Pancreas (tissue), 10 donors: ENCODE measurements at regions of chr2 and their contacts with region 1.

Region 1: DNA sequence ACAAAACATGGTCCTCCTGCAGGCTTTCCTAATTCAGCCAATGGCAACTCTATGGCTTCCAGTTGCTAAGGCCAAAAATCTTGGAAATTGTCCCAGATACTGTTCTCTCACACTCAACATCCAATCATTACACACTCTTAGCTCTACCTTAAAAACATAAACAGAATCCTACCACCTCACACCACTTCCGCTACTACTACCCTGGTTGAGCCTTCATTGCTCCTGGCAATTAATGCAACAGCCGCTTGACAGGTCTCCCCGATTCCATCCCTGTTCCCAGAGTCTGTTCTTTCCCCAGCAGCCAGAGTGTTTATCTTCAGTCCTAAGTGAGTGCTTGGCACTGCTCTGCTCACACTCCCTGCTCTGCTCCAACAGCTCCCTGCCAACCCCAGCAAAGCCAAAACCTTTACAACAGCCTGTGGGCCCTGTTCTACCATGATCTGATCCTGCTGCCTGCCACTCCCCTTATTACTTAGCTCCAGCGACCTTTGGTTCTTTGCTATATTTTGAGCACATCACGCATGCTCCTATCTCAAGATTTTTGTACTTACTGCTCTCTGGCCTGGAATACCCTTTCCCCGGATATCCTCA is 67.5 kb upstream of the AMMECR1L start:
- DNase-seq: peak in 3 of 6 donors; percentile 16 to 27 (median 23)
- ATAC-seq: peak; percentile 69 to 89 (median 82)
- H3K4me3 ChIP-seq: no peak overlapping the region
- H3K27ac ChIP-seq: peak overlapping the region in 1 of 4 donors; percentile 34
- H3K4me1 ChIP-seq: peaks cover 0 to 16% (median 0%) of the 10 kb centered on the region in 3 donors
- H3K27me3 ChIP-seq: no peaks in the 10 kb centered on the region
- CTCF ChIP-seq: no peak

Region 2: DNA sequence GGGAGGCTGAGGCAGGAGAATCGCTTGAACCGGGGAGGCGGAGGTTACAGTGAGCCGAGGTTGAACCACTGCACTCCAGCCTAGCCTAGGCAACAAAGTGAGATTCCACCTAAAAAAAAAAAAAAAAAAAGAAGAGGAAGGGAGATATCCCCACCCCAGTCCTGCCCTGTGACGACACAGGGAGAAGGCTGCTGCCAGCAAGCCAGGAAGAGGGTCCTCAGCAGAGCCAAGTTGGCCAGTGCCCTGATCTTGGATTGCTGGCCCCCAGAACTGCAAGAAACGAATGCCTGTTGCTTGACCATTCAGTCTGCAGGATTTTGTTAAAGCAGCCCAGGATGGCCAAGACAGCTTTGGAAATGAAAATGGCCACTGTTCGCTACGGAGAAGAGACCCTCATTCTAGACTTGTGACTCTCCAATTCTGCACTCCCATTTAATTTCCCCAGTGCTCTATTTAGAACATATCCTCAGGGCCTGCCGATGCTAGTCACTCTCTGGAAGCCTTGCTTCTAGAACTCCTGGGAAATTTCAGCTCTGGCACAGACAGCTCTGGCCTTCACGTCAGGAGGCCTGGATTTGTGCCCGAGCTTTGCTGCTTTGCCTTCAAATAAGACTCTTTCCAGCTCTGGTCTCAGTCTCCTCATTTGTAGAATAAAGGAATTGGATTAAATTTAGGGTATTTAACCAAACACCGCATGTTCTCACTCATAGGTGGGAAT is 51.7 kb before region 1 on chr2:
- intact Hi-C with region 1: loop called in 1 of 3 experiments (anchors 5 kb)
- DNase-seq: peak; percentile 78 to 90 (median 86)
- ATAC-seq: peak; percentile 88 to 93 (median 92)
- H3K4me3 ChIP-seq: no peak overlapping the region
- H3K27ac ChIP-seq: peak overlapping the region in 3 of 4 donors; percentile 22 to 89 (median 81)
- H3K4me1 ChIP-seq: peaks cover 0 to 11% (median 8%) of the 10 kb centered on the region in 3 donors
- H3K27me3 ChIP-seq: no peaks in the 10 kb centered on the region
- CTCF ChIP-seq: no peak